PC-3 (cell line): ENCODE measurements at regions of chr2 and their contacts with region 1.

Region 1: GRCh38 chr2:207828361-207829057 is 58.8 kb upstream of the FZD5 start:
- DNase-seq: peak; percentile 88
- ATAC-seq: peak; percentile 82
- H3K4me3 ChIP-seq: peak overlapping the region; percentile 69
- H3K27ac ChIP-seq: peak overlapping the region; percentile 86
- H3K4me1 ChIP-seq: peaks cover 38% of the 10 kb centered on the region
- H3K27me3 ChIP-seq: no peaks in the 10 kb centered on the region
- CTCF ChIP-seq: no peak

Region 2: DNA sequence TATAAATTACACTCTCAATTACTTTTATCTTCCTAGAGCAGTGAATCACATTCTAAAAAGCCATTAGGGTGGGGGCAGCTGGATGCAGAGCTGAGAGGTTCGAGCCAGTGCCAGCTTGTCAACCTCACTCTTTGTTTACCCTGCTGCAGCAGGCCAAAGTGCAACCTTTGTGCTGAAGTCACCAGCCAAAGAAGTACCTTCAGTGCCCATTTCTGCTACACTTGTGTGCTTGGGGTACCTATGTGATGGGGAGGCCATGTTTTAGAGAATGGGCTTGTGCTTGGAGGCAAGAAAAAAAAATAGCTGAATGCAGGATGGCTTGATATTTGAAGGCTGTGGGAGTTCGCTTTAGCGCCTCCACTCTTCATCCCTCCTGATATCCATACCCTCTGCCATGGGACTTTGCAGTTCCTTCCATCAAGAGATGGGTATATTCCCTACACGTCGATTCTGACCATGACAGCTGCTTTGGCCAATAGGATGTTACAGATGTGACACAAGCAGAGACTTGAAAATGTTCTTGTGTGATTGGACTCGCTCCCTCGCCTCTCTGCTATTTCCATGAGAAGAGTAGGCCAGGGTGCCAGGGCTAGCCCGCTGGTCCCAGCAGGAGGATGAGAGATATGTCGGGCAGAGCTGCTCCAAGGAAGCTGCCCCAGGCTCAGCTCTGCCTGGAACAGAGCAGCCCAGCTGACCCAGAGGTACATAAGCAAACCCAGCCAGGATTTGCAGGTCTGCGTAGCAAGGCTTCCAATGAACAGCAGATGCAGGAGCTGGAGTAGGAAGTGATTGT is 46.1 kb before region 1 on chr2:
- CTCF ChIA-PET with region 1: no interaction called
- POLR2A ChIA-PET with region 1: no interaction called
- intact Hi-C with region 1: loop called (anchors 1 kb)
- DNase-seq: peak; percentile 26
- ATAC-seq: peak; percentile 43
- H3K4me3 ChIP-seq: no peak overlapping the region
- H3K27ac ChIP-seq: no peak overlapping the region
- H3K4me1 ChIP-seq: peaks cover 7% of the 10 kb centered on the region; the same call in 1 of the 2 replicates
- H3K27me3 ChIP-seq: no peaks in the 10 kb centered on the region
- CTCF ChIP-seq: no peak

Region 3: GRCh38 chr2:207847807-207848544 is 19.5 kb after region 1 on chr2:
- CTCF ChIA-PET with region 1: no interaction called
- POLR2A ChIA-PET with region 1: interaction called, 4 read pairs
- intact Hi-C with region 1: loop called (anchors 2 kb)
- DNase-seq: peak; percentile 84
- ATAC-seq: peak; percentile 93
- H3K4me3 ChIP-seq: no peak overlapping the region
- H3K27ac ChIP-seq: no peak overlapping the region
- H3K4me1 ChIP-seq: peaks cover 16% of the 10 kb centered on the region
- H3K27me3 ChIP-seq: no peaks in the 10 kb centered on the region
- CTCF ChIP-seq: no peak

Region 4: DNA sequence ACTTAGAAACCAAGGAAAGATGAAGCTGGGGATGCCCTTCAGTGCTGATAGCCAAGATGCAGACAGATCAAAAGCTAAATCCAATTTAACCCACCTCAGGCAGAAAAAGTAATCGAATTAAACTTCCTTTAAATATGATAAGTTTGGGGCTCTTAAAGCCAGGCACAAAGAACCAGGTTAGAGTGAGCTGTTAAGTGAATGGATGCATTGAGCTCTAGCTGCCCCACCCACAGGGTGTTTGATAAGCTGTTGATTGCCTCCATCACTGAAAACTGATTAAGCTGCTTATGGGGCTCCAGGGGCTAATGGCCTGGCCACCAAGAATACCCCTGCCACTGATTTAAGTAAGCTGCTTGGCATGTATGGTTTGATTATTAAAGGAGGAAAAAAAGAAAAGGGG is 77.0 kb after region 1 on chr2:
- CTCF ChIA-PET with region 1: no interaction called
- POLR2A ChIA-PET with region 1: no interaction called
- intact Hi-C with region 1: no loop called
- DNase-seq: no peak
- ATAC-seq: no peak
- H3K4me3 ChIP-seq: no peak overlapping the region
- H3K27ac ChIP-seq: no peak overlapping the region
- H3K4me1 ChIP-seq: peaks cover 8% of the 10 kb centered on the region
- H3K27me3 ChIP-seq: no peaks in the 10 kb centered on the region
- CTCF ChIP-seq: no peak